CD8-positive, alpha-beta T cell (primary cell): ENCODE measurements at regions of chr1 and their contacts with region 1.

Region 1: DNA sequence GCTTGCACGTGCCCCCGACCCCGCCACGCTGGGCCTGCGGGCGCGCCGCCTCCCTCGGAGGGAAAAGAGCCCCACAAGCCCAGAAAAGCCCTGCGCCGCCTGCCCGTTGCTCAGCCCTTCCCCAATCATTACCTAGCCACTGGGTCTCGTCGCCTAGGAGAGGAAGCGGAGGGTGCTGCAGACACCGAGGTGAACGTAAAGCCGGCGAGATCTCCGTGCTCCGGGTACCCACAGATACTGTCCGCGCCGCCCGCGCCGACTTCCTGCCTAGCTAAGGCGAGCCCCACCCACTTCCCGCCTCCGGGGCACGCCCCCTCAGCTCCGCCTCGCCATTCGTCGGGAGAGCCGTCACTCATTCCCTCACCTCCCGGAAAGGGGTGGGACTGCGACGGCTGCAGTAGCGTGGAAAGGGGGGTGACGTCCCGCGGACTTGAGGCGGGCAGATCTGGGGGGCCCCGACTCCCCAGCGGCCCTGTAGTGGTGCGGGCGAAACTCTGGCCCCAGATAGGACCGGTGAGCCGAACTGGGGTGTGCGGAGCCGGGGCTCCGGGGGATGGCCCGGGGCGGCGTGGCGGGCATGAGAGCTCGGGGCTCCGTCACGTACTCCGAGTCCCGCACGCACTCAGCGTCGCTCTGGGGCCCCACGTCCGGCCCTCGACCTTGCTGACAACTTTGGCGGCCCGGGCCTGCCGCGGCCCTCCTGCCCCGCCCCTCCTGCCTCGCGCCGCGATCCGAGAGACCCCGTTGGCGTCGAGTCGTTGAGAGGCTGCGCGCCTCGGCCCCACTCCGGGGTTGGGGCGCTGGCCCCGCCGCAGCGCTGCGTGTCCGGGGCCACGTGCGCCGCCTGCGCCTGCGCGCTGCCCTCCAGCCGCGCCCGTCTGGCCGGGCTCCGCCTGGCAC is at the start of gene ENO1:
- DNase-seq: peak; percentile 96 to 100 (median 99)
- ATAC-seq: peak; percentile 80
- H3K4me3 ChIP-seq: peak within 1 kb of the TSS; percentile 90 to 94
- H3K4me3 Mint-ChIP-seq: peak within 1 kb of the TSS; percentile 92
- H3K27ac ChIP-seq: peak within 1 kb of the TSS; percentile 80 to 99
- H3K27ac Mint-ChIP-seq: peak within 1 kb of the TSS; percentile 98
- H3K4me1 ChIP-seq: peaks cover 43% of the 10 kb centered on the region
- H3K4me1 Mint-ChIP-seq: peaks cover 47% of the 10 kb centered on the region
- H3K27me3 ChIP-seq: no peaks in the 10 kb centered on the region
- H3K27me3 Mint-ChIP-seq: no peaks in the 10 kb centered on the region
- CTCF ChIP-seq: no peak
- total RNA-seq, gene ENO1: 130 to 136 TPM

Region 2: GRCh38 chr1:7783826-7784491 is 1094.7 kb before region 1 on chr1 and contains the start of gene PER3:
- CTCF ChIA-PET with region 1: no interaction called
- POLR2A ChIA-PET with region 1: no interaction called
- intact Hi-C with region 1: loop called in 1 of 2 experiments (anchors 5 kb)
- DNase-seq: peak; percentile 82 to 96 (median 89)
- ATAC-seq: peak; percentile 88
- H3K4me3 ChIP-seq: peak within 1 kb of the TSS; percentile 55 to 68
- H3K4me3 Mint-ChIP-seq: peak within 1 kb of the TSS; percentile 72
- H3K27ac ChIP-seq: peak within 1 kb of the TSS; percentile 76 to 88
- H3K27ac Mint-ChIP-seq: peak within 1 kb of the TSS; percentile 60
- H3K4me1 ChIP-seq: peaks cover 27% of the 10 kb centered on the region
- H3K4me1 Mint-ChIP-seq: peaks cover 30% of the 10 kb centered on the region
- H3K27me3 ChIP-seq: no peaks in the 10 kb centered on the region
- H3K27me3 Mint-ChIP-seq: no peaks in the 10 kb centered on the region
- CTCF ChIP-seq: no peak
- total RNA-seq, gene PER3: 8.7 to 10.2 TPM

Region 3: DNA sequence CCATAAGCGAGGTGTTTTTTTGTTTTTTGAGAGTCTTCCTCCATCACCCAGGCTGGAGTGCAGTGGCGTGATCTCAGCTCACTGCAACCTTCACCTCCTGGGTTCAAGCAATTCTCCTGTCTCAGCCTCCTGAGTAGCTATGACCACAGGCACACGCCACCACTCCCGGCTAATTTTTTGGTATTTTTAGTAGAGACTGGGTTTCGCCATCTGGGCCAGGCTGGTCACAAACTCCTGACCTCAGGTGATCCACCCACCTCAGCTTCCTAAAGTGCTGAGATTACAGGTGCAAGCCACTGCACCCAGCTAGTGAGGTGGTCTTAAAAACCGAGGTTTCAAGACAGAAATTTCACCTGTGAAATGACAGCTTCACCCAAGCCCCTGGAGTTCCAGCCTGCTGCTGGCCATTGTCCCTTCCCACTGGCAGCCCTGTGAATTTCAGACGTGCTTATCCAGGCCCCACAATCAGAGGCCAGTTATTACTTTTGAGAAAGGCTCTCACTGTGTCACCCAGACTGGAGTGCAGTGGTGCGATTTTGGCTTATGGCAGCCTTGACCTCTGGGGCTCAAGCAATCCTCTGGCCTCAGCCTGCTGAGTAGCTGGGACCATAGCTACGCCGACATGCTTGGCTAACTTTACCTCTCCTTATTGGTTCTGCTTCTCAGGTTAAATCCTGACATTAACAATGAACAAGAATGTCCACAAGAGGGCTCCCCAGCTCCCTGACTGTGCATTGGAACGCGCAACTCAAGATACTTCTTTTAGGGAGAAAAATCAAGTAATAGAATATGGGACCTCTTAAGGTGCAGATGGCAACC is 19.6 kb before region 1 on chr1:
- CTCF ChIA-PET with region 1: interaction called, 77 read pairs
- POLR2A ChIA-PET with region 1: interaction called, 16 read pairs
- intact Hi-C with region 1: loop called (anchors 1 kb)
- DNase-seq: peak in 7 of 9 experiments; percentile 37 to 76 (median 59)
- ATAC-seq: peak; percentile 79
- H3K4me3 ChIP-seq: no peak overlapping the region
- H3K4me3 Mint-ChIP-seq: no peak overlapping the region
- H3K27ac ChIP-seq: peak overlapping the region in 1 of 2 experiments; percentile 31
- H3K27ac Mint-ChIP-seq: peak overlapping the region; percentile 77
- H3K4me1 ChIP-seq: no peaks in the 10 kb centered on the region
- H3K4me1 Mint-ChIP-seq: peaks cover 15% of the 10 kb centered on the region
- H3K27me3 ChIP-seq: no peaks in the 10 kb centered on the region
- H3K27me3 Mint-ChIP-seq: no peaks in the 10 kb centered on the region
- CTCF ChIP-seq: peak; percentile 65

Region 4: GRCh38 chr1:8903908-8904650 is 25.4 kb after region 1 on chr1:
- CTCF ChIA-PET with region 1: no interaction called
- POLR2A ChIA-PET with region 1: interaction called, 5 read pairs
- intact Hi-C with region 1: loop called in 1 of 2 experiments (anchors 2 kb)
- DNase-seq: no peak
- ATAC-seq: no peak
- H3K4me3 ChIP-seq: no peak overlapping the region
- H3K4me3 Mint-ChIP-seq: no peak overlapping the region
- H3K27ac ChIP-seq: no peak overlapping the region
- H3K27ac Mint-ChIP-seq: peak overlapping the region; percentile 42
- H3K4me1 ChIP-seq: peaks cover 25% of the 10 kb centered on the region
- H3K4me1 Mint-ChIP-seq: peaks cover 56% of the 10 kb centered on the region
- H3K27me3 ChIP-seq: no peaks in the 10 kb centered on the region
- H3K27me3 Mint-ChIP-seq: no peaks in the 10 kb centered on the region
- CTCF ChIP-seq: no peak

Region 5: GRCh38 chr1:8987881-8988617 is 109.4 kb after region 1 on chr1:
- CTCF ChIA-PET with region 1: interaction called, 6 read pairs
- POLR2A ChIA-PET with region 1: interaction called, 3 read pairs
- intact Hi-C with region 1: loop called in 1 of 2 experiments (anchors 5 kb)
- DNase-seq: peak in 8 of 9 experiments; percentile 47 to 84 (median 70)
- ATAC-seq: peak; percentile 67
- H3K4me3 ChIP-seq: peak overlapping the region in 1 of 2 experiments; percentile 24
- H3K4me3 Mint-ChIP-seq: peak overlapping the region; percentile 67
- H3K27ac ChIP-seq: no peak overlapping the region
- H3K27ac Mint-ChIP-seq: peak overlapping the region; percentile 92
- H3K4me1 ChIP-seq: peaks cover 37% of the 10 kb centered on the region
- H3K4me1 Mint-ChIP-seq: peaks cover 30% of the 10 kb centered on the region
- H3K27me3 ChIP-seq: no peaks in the 10 kb centered on the region
- H3K27me3 Mint-ChIP-seq: no peaks in the 10 kb centered on the region
- CTCF ChIP-seq: peak; percentile 99

Region 6: DNA sequence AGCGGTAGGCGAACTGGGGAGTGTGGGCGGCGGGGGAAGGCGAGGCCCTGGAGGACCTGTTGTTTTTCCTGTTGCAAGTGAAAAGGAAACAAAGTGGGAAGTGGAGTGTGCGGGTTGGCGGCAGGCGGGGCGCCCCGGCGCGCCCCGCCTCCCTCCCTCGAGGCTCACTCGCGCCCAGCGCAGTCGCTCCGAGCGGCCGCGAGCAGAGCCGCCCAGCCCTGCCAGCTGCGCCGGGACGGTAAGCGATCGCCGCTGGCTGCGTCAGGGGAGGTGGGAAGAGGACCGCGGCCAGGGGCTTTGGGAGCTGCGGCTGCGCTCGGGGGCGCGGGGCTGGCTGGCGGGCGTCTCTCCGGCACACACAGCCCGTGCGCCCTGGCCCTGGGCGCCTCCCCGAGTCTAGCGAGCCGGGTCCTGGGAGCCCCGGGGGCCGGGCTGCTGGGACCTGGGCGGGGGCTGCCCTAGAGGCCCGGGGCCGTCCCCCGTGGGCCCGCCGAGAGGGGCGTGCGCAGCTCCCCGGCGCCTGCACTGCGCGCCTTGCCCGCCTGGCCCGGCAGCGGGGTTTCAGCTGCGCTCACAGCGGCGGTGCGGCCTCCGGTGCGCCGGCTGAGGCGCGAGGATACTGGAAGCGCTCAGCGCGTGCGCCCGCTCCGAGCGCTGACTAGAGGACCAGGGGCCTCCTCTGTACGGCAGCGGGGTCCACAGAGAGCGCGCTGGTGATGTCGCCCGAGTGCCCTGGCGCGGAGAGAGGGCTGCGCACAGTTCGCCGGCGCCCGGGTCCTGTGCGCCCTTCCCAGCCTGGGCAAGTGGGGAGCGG is 773.1 kb after region 1 on chr1 and contains the start of gene PIK3CD:
- CTCF ChIA-PET with region 1: no interaction called
- POLR2A ChIA-PET with region 1: no interaction called
- intact Hi-C with region 1: loop called in 1 of 2 experiments (anchors 5 kb)
- DNase-seq: peak in 8 of 9 experiments; percentile 21 to 76 (median 56)
- ATAC-seq: peak; percentile 45
- H3K4me3 ChIP-seq: peak within 1 kb of the TSS; percentile 86
- H3K4me3 Mint-ChIP-seq: peak within 1 kb of the TSS; percentile 100
- H3K27ac ChIP-seq: peak within 1 kb of the TSS; percentile 68 to 78
- H3K27ac Mint-ChIP-seq: peak within 1 kb of the TSS; percentile 99
- H3K4me1 ChIP-seq: peaks cover 59% of the 10 kb centered on the region
- H3K4me1 Mint-ChIP-seq: peaks cover 71% of the 10 kb centered on the region
- H3K27me3 ChIP-seq: no peaks in the 10 kb centered on the region
- H3K27me3 Mint-ChIP-seq: no peaks in the 10 kb centered on the region
- CTCF ChIP-seq: no peak
- total RNA-seq, gene PIK3CD: 200 to 214 TPM